Activated CD4-positive, alpha-beta T cell treated with anti-CD3 and anti-CD28 coated beads for 36 hours (primary cell): ENCODE measurements at regions of chr17 and their contacts with region 1.

Region 1: GRCh38 chr17:1179818-1180742 is at the start of gene ABR:
- DNase-seq: peak; percentile 74
- ATAC-seq: peak; percentile 54
- H3K4me3 Mint-ChIP-seq: peak within 1 kb of the TSS; percentile 59
- H3K27ac Mint-ChIP-seq: no peak within 1 kb of the TSS
- H3K4me1 Mint-ChIP-seq: peaks cover 10% of the 10 kb centered on the region
- H3K27me3 Mint-ChIP-seq: peaks cover 4% of the 10 kb centered on the region
- total RNA-seq, gene ABR: 45.2 to 50.5 TPM

Region 2: GRCh38 chr17:1108861-1109605 is 71.0 kb before region 1 on chr17:
- CTCF ChIA-PET with region 1: no interaction called
- POLR2A ChIA-PET with region 1: no interaction called
- intact Hi-C with region 1: loop called in 1 of 2 experiments (anchors 2 kb)
- DNase-seq: peak; percentile 78
- ATAC-seq: peak; percentile 75
- H3K4me3 Mint-ChIP-seq: peak overlapping the region; percentile 79
- H3K27ac Mint-ChIP-seq: peak overlapping the region; percentile 80
- H3K4me1 Mint-ChIP-seq: peaks cover 36% of the 10 kb centered on the region
- H3K27me3 Mint-ChIP-seq: no peaks in the 10 kb centered on the region

Region 3: DNA sequence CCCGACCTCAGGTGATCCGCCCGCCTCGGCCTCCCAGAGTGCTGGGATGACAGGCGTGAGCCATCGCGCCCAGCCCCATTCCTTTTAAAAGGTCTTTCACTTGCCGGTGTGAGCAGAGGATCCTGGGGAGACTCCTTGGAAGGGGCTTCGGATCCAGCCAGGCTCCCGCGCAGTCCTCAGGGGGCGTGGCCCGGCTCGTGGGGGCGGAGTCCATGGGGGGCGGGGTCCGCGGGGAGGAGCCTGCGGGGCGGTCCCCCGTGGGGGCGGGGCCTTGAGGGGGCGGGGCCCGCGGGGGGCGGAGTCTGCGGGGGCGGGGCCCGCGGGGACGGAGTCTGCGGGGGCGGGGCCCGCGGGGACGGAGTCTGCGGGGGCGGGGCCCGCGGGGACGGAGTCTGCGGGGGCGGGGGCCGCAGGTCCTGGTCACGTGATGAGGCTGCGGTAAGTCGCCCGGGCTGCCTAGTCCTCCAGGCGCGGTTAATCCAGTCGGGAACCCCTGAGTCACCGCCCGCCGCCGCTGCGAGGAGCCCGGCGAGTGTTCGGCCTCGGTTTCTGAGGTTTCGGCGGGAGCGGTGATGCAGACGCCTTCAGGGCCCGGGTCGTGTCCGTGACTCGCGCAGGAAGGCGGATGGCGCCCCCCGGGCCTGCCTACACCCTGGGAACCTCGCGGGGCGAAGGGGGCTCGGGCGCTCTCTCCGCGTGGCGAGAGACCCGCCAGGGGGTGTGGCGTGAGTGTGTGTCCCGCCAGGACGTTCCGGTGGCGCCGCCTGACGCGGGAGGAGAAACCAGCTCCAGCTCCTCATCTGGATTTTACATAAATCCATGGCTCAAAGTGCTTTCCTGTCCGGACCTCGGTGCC is 23.3 kb after region 1 on chr17:
- CTCF ChIA-PET with region 1: interaction called, 3 read pairs
- POLR2A ChIA-PET with region 1: no interaction called
- intact Hi-C with region 1: loop called in 1 of 2 experiments (anchors 1 kb)
- DNase-seq: peak; percentile 72
- ATAC-seq: peak; percentile 56
- H3K4me3 Mint-ChIP-seq: no peak overlapping the region
- H3K27ac Mint-ChIP-seq: no peak overlapping the region
- H3K4me1 Mint-ChIP-seq: peaks cover 16% of the 10 kb centered on the region
- H3K27me3 Mint-ChIP-seq: peaks cover 2% of the 10 kb centered on the region

Region 4: GRCh38 chr17:1241929-1242328 is 61.8 kb after region 1 on chr17:
- CTCF ChIA-PET with region 1: no interaction called
- POLR2A ChIA-PET with region 1: no interaction called
- intact Hi-C with region 1: no loop called
- DNase-seq: no peak
- ATAC-seq: no peak
- H3K4me3 Mint-ChIP-seq: no peak overlapping the region
- H3K27ac Mint-ChIP-seq: no peak overlapping the region
- H3K4me1 Mint-ChIP-seq: peaks cover 16% of the 10 kb centered on the region
- H3K27me3 Mint-ChIP-seq: peaks cover 14% of the 10 kb centered on the region

Region 5: DNA sequence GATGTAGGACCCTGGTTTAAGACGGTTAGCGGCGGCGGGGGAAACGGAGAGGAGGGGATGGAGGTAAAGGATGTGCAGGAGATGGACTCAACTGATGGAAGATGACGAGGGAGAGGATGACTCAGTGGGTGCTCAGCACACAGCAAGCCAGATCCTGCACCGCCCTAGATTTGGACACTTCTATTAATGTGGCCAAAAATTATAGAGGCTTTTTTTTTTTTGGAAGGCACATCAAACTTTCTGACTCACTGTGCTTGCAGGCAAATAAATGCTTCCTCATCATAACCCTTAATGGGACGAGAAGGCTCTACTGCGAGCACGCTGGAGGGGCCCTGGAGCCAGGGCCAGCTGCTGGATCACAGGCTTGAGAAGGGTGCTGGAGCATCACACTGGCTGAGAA is 809.1 kb after region 1 on chr17:
- CTCF ChIA-PET with region 1: no interaction called
- POLR2A ChIA-PET with region 1: no interaction called
- intact Hi-C with region 1: no loop called
- DNase-seq: no peak
- ATAC-seq: no peak
- H3K4me3 Mint-ChIP-seq: no peak overlapping the region
- H3K27ac Mint-ChIP-seq: no peak overlapping the region
- H3K4me1 Mint-ChIP-seq: no peaks in the 10 kb centered on the region
- H3K27me3 Mint-ChIP-seq: peaks cover 1% of the 10 kb centered on the region